ENCODE measurements at regions of chr7 and their contacts with region 1.

Region 1: DNA sequence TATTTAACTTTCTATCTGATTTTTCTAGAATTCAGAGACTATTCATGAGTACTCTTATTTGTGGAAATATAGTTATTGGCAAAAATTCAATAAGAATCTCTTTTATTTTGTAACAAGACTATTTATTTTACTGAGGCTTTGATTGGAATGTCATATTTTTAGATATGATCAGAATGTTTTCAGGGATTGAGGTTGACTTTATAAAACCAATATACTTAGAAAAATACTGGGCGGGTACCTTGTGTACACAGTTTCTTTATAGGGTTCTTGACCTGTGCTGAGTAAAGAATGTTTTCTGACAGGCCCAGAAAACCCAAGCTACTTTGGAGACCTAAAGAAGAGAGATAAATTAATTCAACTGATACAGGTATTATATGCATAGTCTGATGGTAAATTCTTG is 24.0 kb upstream of the SPAM1 start:
- DNase-seq: no peak
- H3K4me3 ChIP-seq: no peak overlapping the region
- H3K27ac ChIP-seq: no peak overlapping the region
- H3K4me1 ChIP-seq: no peaks in the 10 kb centered on the region
- H3K27me3 ChIP-seq: no peaks in the 10 kb centered on the region
- CTCF ChIP-seq: no peak
- POLR2A ChIP-seq: no peak

Region 2: DNA sequence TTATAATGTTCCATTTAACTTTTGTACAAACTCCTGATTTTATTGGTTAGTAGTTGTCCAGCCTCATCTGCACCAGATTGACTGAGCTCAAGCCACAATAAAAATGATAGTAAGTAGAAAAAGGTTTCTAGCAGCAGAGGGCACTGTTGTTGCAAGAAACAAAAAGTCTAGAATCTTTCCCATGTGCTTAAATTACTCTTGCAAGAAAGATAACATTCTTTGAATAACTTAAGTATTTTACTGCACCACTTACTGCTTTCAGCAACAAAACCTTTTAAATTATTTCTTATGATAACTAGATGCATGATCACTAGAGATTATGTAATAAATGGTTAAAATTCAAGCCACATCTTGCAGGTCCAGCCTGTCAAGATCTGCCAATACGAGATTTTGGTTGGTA is 218.4 kb before region 1 on chr7:
- CTCF ChIA-PET with region 1: no interaction called
- POLR2A ChIA-PET with region 1: no interaction called
- dilution Hi-C with region 1: no loop called
- intact Hi-C with region 1: no loop called
- DNase-seq: peak; percentile 72
- H3K4me3 ChIP-seq: no peak overlapping the region
- H3K27ac ChIP-seq: no peak overlapping the region
- H3K4me1 ChIP-seq: no peaks in the 10 kb centered on the region
- H3K27me3 ChIP-seq: no peaks in the 10 kb centered on the region
- CTCF ChIP-seq: peak; percentile 25 to 41
- POLR2A ChIP-seq: no peak

Region 3: GRCh38 chr7:123748734-123749536 is 152.1 kb before region 1 on chr7 and contains the start of gene WASL:
- CTCF ChIA-PET with region 1: no interaction called
- POLR2A ChIA-PET with region 1: no interaction called
- dilution Hi-C with region 1: no loop called
- intact Hi-C with region 1: no loop called
- DNase-seq: peak; percentile 89
- H3K4me3 ChIP-seq: peak within 1 kb of the TSS; percentile 93 to 98 (median 98)
- H3K27ac ChIP-seq: peak within 1 kb of the TSS; percentile 71
- H3K4me1 ChIP-seq: peaks cover 46% of the 10 kb centered on the region
- H3K27me3 ChIP-seq: no peaks in the 10 kb centered on the region
- CTCF ChIP-seq: no peak
- POLR2A ChIP-seq: peak; percentile 87
- total RNA-seq, gene WASL: 22.1 and 24.0 TPM in 2 replicates

Region 4: GRCh38 chr7:123888192-123888591 is 12.9 kb before region 1 on chr7:
- CTCF ChIA-PET with region 1: interaction called, 11 read pairs
- POLR2A ChIA-PET with region 1: no interaction called
- dilution Hi-C with region 1: no loop called
- intact Hi-C with region 1: no loop called
- DNase-seq: no peak
- H3K4me3 ChIP-seq: no peak overlapping the region
- H3K27ac ChIP-seq: no peak overlapping the region
- H3K4me1 ChIP-seq: no peaks in the 10 kb centered on the region
- H3K27me3 ChIP-seq: no peaks in the 10 kb centered on the region
- CTCF ChIP-seq: no peak
- POLR2A ChIP-seq: no peak